Pancreas (tissue), 10 donors: ENCODE measurements at regions of chr2 and their contacts with region 1.

Region 1: DNA sequence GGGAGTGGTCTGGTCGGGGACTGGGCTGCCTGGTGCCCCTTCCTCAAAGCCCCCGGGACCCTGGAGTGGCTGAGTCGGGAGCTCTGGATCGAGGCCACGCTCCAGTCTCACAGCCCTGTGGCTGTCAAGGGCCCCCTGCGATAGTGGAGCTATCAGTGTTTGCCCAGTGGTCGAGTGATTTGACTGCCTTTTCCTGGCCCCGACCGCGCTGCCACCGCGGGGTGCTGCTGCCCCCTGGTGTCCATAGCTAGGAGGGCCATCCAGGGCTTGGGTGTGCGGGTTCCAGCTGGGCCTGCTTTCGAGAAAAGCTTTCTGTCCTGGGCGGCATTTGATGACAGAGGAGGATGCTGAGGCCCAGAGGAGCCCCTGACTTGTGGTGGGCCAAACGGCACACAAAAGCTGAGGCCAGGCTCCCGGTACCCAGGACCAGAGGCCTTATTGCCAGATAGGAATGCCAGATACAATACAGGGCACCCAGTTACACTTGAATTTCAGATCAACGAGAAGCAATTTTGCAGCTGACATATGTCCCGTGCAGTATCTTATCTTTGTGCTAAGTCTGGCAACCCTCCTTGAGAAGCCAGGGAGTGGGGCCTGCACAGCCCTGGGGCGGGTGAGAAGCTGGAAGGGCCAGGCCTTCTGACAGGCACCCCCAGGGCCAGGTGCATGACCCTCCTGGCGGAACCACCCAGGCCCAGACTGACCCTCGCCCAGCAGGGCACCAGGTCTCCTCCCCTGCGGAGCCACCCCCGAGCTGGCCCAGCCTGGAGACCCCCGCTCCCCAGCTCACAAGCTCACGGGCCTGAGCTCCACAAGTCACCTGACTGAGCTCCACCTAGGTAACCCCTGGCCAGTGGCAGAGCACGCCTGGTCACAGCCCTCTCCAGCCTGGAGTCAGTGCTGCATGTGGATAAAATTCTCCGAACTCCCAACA is 13.0 kb downstream of the ODC1 start:
- DNase-seq: peak; percentile 62 to 92 (median 80)
- ATAC-seq: peak; percentile 72 to 94 (median 84)
- H3K4me3 ChIP-seq: no peak overlapping the region
- H3K27ac ChIP-seq: no peak overlapping the region
- H3K4me1 ChIP-seq: peaks cover 0 to 6% (median 0%) of the 10 kb centered on the region in 3 donors
- H3K27me3 ChIP-seq: no peaks in the 10 kb centered on the region
- CTCF ChIP-seq: peak; percentile 93 to 98 (median 96)

Region 2: DNA sequence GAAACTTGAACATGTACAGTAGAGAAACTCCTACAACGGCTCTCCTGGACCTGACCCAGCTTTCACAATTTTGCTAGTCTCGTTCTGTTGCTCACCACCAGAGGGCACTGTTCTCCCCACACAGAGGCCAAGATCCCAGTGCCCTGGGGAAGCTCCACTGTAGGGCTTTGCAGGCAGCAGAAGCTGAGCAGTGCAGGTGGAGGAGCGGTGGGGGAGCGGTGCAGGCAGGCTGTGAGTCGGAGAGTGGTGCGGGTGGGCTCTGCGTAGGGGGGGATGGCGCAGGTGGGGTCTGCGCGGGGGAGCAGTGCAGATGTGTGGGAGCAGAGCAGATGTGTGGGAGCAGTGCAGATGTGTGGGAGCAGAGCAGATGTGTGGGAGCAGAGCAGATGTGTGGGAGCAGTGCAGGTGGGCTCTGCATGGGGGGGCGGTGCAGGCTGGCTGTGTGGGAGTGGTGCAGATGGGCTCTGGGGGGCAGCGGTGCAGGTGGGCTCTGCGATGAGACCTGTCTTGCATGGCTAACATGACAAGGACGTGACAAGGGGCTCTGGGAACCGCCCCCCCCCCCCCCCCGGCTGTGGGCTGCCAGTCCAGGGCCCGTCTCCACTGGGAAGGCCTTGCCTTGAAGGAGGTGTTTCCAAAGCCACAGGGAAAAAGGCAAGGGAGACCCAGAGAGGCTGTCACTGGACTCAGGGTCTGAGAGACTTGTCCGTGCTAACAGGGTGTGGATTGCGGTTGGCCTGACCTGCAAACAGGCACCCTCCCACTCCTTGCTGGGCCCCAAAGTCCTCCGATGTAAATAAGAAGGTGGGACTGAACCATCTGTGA is 362.3 kb before region 1 on chr2:
- intact Hi-C with region 1: loop called in 1 of 3 experiments (anchors 5 kb)
- DNase-seq: peak; percentile 79 to 92 (median 84)
- ATAC-seq: peak; percentile 92 to 99 (median 98)
- H3K4me3 ChIP-seq: no peak overlapping the region
- H3K27ac ChIP-seq: no peak overlapping the region
- H3K4me1 ChIP-seq: no peaks in the 10 kb centered on the region
- H3K27me3 ChIP-seq: no peaks in the 10 kb centered on the region
- CTCF ChIP-seq: peak; percentile 74 to 86 (median 82)

Region 3: DNA sequence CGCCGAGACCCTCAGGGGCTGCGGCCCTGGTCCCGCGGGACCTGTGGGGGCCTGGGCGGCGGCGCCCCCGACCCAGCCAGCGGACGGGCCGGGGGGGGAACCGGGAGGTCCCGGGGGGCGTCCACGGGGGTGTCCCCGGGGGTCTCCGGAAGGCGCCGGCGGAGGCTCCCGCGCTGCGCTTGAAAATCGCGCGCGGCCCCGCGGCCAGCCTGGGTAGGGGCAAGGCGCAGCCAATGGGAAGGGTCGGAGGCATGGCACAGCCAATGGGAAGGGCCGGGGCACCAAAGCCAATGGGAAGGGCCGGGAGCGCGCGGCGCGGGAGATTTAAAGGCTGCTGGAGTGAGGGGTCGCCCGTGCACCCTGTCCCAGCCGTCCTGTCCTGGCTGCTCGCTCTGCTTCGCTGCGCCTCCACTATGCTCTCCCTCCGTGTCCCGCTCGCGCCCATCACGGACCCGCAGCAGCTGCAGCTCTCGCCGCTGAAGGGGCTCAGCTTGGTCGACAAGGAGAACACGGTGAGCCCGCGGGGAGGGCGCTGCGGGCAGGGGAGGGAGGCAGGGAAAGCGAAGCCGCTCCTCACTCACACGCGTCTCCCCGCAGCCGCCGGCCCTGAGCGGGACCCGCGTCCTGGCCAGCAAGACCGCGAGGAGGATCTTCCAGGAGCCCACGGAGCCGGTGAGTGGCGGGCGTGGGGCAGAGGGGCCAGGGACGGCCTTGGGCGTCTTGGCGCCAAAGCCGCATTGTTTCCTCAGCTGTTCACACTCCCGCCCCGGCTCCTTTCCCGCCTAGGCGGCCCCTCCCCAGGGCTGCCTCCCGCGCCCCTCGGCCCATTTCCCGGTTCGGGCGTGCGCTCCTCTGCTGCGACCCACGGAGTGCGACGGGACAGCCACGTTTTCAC is 312.5 kb before region 1 on chr2 and contains the start of gene RRM2:
- intact Hi-C with region 1: loop called in 1 of 3 experiments (anchors 5 kb)
- DNase-seq: peak; percentile 87 to 96 (median 91)
- ATAC-seq: peak; percentile 75 to 86 (median 82)
- H3K4me3 ChIP-seq: peak within 1 kb of the TSS; percentile 29 to 69 (median 39)
- H3K27ac ChIP-seq: no peak within 1 kb of the TSS
- H3K4me1 ChIP-seq: peaks cover 12 to 26% (median 14%) of the 10 kb centered on the region in 3 donors
- H3K27me3 ChIP-seq: no peaks in the 10 kb centered on the region
- CTCF ChIP-seq: no peak
- total RNA-seq, gene RRM2: 0.24 to 3.0 (median 2.1) TPM

Region 4: GRCh38 chr2:10135296-10136089 is 299.7 kb before region 1 on chr2:
- intact Hi-C with region 1: loop called in 2 of 3 experiments (anchors 5 kb)
- DNase-seq: peak in 1 of 6 donors; percentile 5
- ATAC-seq: no peak
- H3K4me3 ChIP-seq: no peak overlapping the region
- H3K27ac ChIP-seq: no peak overlapping the region
- H3K4me1 ChIP-seq: no peaks in the 10 kb centered on the region
- H3K27me3 ChIP-seq: no peaks in the 10 kb centered on the region
- CTCF ChIP-seq: no peak

Region 5: DNA sequence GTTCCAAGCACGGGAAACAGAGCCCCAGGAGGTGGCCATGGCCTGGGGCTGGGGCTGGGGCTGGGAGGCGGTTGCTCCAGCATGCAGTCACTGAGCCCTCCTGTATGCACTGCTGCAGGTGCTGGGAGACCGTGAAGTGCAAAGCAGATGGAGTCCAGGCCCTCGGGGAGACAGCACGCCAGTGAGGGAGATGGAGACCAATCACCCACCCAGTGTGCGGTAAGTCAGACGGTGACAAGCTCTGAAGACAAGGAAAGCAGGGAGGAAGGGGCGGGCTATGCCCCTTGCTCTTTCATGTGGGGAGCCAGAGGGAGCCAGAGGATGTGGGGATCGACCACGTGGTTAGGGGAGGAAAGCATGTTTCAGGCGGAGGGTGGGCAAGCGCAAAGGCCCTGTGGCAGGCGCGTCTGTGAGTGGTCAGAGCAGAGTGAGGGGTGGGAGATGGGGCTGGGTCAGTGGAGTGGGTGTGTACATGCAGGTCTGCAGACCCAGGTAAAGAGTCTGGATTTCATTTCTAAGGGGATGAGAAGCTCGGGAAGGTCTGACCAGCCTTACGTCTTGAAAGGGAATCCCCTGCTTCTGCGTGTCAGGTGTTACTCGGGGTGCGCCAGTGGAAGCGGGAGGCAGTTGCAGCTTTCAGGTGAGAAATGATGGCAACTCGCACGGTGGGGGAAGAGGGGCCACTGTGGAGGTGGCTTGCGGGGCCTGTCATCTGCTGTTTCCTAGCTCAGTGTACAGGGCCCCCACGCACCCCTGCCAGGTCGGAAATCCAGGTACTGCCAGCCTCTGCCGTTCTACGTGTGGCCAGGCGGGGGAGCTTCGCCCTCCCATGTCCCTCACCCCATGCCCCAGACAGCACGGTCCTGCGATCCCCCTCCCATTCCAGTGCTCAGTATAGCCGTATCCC is 293.2 kb before region 1 on chr2:
- intact Hi-C with region 1: loop called in 2 of 3 experiments (anchors 5 kb)
- DNase-seq: peak in 5 of 6 donors; percentile 21 to 85 (median 60)
- ATAC-seq: peak; percentile 86 to 95 (median 92)
- H3K4me3 ChIP-seq: no peak overlapping the region
- H3K27ac ChIP-seq: no peak overlapping the region
- H3K4me1 ChIP-seq: no peaks in the 10 kb centered on the region
- H3K27me3 ChIP-seq: no peaks in the 10 kb centered on the region
- CTCF ChIP-seq: peak; percentile 50 to 60 (median 54)

Region 6: GRCh38 chr2:10278029-10278762 is 157.0 kb before region 1 on chr2:
- intact Hi-C with region 1: no loop called
- DNase-seq: peak in 4 of 6 donors; percentile 38 to 81 (median 64)
- ATAC-seq: peak; percentile 44 to 86 (median 75)
- H3K4me3 ChIP-seq: no peak overlapping the region
- H3K27ac ChIP-seq: peak overlapping the region in 3 of 4 donors; percentile 12 to 58 (median 55)
- H3K4me1 ChIP-seq: no peaks in the 10 kb centered on the region
- H3K27me3 ChIP-seq: no peaks in the 10 kb centered on the region
- CTCF ChIP-seq: no peak

Region 7: GRCh38 chr2:10520154-10520553 is 85.0 kb after region 1 on chr2:
- intact Hi-C with region 1: no loop called
- DNase-seq: no peak
- ATAC-seq: no peak
- H3K4me3 ChIP-seq: no peak overlapping the region
- H3K27ac ChIP-seq: no peak overlapping the region
- H3K4me1 ChIP-seq: no peaks in the 10 kb centered on the region
- H3K27me3 ChIP-seq: no peaks in the 10 kb centered on the region
- CTCF ChIP-seq: no peak